Spleen (tissue), 13 donors: ENCODE measurements at regions of chr16 and their contacts with region 1.

Region 1: GRCh38 chr16:4802659-4803287 is 340 bp upstream of the ROGDI start:
- DNase-seq: peak; percentile 97
- H3K4me3 ChIP-seq: peak overlapping the region; percentile 55 to 99 (median 93)
- H3K27ac ChIP-seq: peak overlapping the region; percentile 62 to 95 (median 90)
- H3K4me1 ChIP-seq: peaks cover 19 to 42% (median 33%) of the 10 kb centered on the region in 6 donors
- H3K27me3 ChIP-seq: no peaks in the 10 kb centered on the region
- CTCF ChIP-seq: peak in 9 of 11 experiments; percentile 23 to 65 (median 49)
- POLR2A ChIP-seq: no peak

Region 2: DNA sequence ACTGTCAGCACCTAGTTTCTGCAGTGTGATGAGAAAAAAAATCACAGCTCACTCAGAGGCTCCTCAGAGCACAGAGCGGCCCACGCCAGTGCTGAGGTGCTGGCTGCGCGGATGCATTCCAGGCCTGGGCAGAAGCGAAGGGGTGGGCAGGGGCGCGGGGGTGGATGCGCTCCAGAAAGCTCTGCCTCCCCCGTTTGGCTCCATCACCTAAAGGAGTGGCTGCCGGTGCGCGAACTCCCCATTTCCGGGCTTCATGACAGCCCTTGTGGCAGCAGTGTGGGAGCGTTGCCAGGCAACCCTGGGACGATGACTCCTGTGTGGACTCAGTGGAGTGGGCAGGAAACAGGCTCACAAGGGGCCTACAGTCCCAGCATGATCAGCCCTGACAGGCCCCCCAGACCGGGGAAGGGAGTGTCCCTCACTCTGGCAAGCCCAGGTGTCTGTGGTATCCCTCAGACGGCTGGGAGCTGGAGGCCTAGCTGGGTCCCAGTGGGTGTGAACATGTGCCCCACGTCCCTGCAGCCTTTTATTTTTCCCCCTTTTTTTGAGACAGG is 142.2 kb before region 1 on chr16:
- intact Hi-C with region 1: no loop called
- DNase-seq: peak; percentile 87
- H3K4me3 ChIP-seq: no peak overlapping the region
- H3K27ac ChIP-seq: peak overlapping the region; percentile 29 to 85 (median 72)
- H3K4me1 ChIP-seq: peaks cover 38 to 74% (median 54%) of the 10 kb centered on the region in 6 donors
- H3K27me3 ChIP-seq: no peaks in the 10 kb centered on the region
- CTCF ChIP-seq: no peak
- POLR2A ChIP-seq: no peak

Region 3: DNA sequence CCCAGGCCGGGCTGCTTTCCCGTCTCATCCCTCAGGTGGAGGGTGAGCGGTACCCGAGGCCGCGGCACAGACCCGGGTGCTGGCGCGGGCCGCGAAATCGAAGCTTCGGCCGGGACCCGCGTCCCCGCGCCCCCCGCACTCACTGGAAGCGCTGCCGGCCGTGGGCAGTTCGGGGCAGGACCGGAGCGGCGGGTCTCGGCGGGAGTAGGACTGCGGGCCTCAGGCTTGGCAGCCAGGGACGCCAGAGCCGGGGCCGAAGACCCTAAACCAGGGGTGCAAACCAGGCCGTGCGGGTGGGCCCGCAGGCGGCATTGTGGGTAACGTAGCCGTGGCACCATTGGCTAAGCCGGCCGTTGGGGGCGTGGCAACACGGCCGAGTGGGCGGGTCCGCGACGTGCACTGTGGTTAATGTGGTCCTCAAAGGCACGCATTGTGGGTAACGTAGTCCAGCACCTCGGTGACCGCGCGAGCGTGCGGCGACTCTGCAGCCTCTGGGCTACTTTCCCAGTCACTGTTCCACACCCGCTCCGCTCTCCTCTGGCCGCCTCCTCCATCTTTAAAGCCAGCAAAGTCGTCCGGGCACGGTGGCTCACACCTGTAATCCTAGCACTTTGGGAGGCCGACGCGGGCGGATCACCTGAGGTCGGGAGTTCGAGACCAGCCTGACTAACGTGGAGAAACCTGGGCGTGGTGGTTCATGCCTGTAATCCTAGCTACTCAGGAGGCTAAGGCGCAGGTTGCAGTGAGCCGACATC is 35.7 kb before region 1 on chr16 and contains the start of gene ZNF500:
- intact Hi-C with region 1: loop called (anchors 5 kb)
- DNase-seq: peak; percentile 99
- H3K4me3 ChIP-seq: peak within 1 kb of the TSS; percentile 85 to 99 (median 95)
- H3K27ac ChIP-seq: peak within 1 kb of the TSS; percentile 68 to 95 (median 88)
- H3K4me1 ChIP-seq: peaks cover 24 to 69% (median 57%) of the 10 kb centered on the region in 6 donors
- H3K27me3 ChIP-seq: no peaks in the 10 kb centered on the region
- CTCF ChIP-seq: peak in 3 of 11 experiments; percentile 14 to 28 (median 23)
- POLR2A ChIP-seq: no peak
- total RNA-seq, gene ZNF500: 12.0 to 32.3 (median 22.2) TPM

Region 4: GRCh38 chr16:5056352-5056751 is 253.6 kb after region 1 on chr16:
- intact Hi-C with region 1: no loop called
- DNase-seq: peak; percentile 80
- H3K4me3 ChIP-seq: no peak overlapping the region
- H3K27ac ChIP-seq: no peak overlapping the region
- H3K4me1 ChIP-seq: peaks cover 0 to 17% (median 4%) of the 10 kb centered on the region in 6 donors
- H3K27me3 ChIP-seq: no peaks in the 10 kb centered on the region
- CTCF ChIP-seq: peak in 10 of 11 experiments; percentile 9 to 62 (median 40)
- POLR2A ChIP-seq: no peak